HEK293 (cell line): ENCODE measurements at regions of chr19 and their contacts with region 1.

Region 1: GRCh38 chr19:34145741-34146202 is 26.5 kb upstream of the LSM14A start:
- H3K4me3 ChIP-seq: no peak overlapping the region
- H3K27ac ChIP-seq: no peak overlapping the region
- H3K4me1 ChIP-seq: peaks cover 3% of the 10 kb centered on the region; the same call in 1 of the 2 replicates
- CTCF ChIP-seq: peak; percentile 93

Region 2: GRCh38 chr19:34109601-34110000 is 36.2 kb before region 1 on chr19:
- CTCF ChIA-PET with region 1: interaction called, 21 read pairs
- POLR2A ChIA-PET with region 1: no interaction called
- H3K4me3 ChIP-seq: no peak overlapping the region
- H3K27ac ChIP-seq: no peak overlapping the region
- H3K4me1 ChIP-seq: no peaks in the 10 kb centered on the region; the same call in 1 of the 2 replicates
- CTCF ChIP-seq: no peak

Region 3: DNA sequence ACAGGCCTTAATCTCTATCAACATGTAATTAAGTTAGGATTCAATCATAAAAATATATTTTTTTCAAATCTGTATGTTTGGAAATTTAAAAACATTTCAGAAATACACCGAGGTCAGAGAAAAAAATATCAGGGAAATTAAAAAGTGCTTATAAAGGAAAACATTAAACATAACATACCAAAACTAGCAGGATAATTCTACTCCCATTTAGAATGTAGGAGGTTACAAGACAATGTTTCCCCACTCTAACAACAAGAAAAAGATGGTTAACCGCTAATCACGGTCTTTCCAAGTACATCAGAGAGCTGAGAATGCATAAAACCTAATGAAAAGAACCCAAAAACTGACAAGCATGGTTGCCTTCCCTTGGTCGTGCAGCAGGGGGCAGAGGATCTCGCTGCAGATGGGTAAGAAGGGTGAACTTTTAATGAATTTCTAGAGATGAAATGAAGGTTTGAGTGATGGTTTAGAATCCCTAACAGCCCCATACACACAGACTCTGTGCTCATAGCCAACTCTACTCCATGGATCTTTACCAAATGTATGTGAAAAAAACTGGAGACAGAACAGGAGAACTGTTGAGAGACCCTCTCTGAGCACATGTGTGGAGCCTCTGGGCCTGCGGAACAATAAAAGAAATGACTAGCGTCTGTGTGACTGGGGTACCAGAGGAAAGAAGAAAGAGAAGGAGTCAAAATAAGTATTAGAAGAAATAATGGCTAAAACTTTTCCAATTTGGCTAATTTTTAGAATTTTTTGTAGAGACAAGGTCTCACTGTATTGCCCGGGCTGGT is 24.7 kb before region 1 on chr19:
- CTCF ChIA-PET with region 1: interaction called, 133 read pairs
- POLR2A ChIA-PET with region 1: interaction called, 3 read pairs
- H3K4me3 ChIP-seq: no peak overlapping the region
- H3K27ac ChIP-seq: no peak overlapping the region
- H3K4me1 ChIP-seq: peaks cover 7% of the 10 kb centered on the region; the same call in 1 of the 2 replicates
- CTCF ChIP-seq: peak; percentile 52; the same call in 1 of the 2 replicates

Region 4: GRCh38 chr19:34128558-34129250 is 17.1 kb before region 1 on chr19:
- CTCF ChIA-PET with region 1: interaction called, 44 read pairs
- POLR2A ChIA-PET with region 1: interaction called, 16 read pairs
- H3K4me3 ChIP-seq: no peak overlapping the region
- H3K27ac ChIP-seq: no peak overlapping the region
- H3K4me1 ChIP-seq: peaks cover 6% of the 10 kb centered on the region
- CTCF ChIP-seq: no peak

Region 5: DNA sequence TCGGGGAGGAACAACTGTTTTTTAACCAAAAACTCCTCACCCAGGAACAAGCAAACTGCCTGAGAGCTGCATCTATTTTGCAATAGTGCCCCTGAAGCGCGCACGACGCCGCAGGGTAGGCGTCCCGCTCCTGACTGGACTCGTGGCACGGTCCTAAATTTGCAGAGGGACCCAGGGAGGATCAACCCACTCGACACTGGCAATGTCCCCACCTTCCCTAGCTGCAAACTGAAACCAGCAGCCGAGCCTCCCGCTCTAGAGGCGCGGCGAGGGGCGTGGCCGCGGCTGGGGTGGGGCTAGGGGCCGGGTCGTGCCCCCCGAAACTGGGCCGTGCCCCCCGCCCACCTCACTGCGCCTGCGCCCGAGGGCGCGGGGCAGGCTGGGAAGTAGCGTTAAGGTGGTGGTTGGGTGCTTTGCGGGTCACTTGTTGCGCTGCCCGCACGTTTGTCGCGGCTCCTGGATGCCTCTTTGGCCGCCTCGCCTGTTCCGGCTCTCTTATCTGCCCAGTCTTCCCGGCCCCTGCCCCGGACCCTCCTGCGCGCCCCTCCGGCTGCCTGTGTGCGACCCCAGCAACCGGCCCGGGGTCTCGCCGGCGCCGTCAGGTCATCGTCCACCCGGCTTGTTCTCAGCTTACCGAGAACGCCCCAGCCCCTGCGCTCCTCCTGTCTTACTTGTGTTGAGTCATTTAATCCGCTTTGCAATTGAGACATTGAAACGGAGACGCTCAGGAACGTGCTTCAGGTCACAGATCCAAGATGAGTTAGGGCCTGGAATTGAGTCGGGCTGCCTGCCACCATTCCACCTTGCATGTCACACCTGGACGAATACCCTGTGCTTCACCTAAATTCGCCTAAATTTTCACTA is 11.3 kb before region 1 on chr19:
- CTCF ChIA-PET with region 1: interaction called, 44 read pairs
- POLR2A ChIA-PET with region 1: interaction called, 16 read pairs
- H3K4me3 ChIP-seq: peak overlapping the region; percentile 53
- H3K27ac ChIP-seq: peak overlapping the region; percentile 99
- H3K4me1 ChIP-seq: peaks cover 11% of the 10 kb centered on the region
- CTCF ChIP-seq: peak; percentile 79; the same call in 1 of the 2 replicates

Region 6: GRCh38 chr19:34171877-34172660 is 26.3 kb after region 1 on chr19 and contains the start of gene LSM14A:
- CTCF ChIA-PET with region 1: interaction called, 11 read pairs
- POLR2A ChIA-PET with region 1: interaction called, 3 read pairs
- H3K4me3 ChIP-seq: peak within 1 kb of the TSS; percentile 85
- H3K27ac ChIP-seq: peak within 1 kb of the TSS; percentile 100
- H3K4me1 ChIP-seq: peaks cover 37% of the 10 kb centered on the region
- CTCF ChIP-seq: peak; percentile 20

Region 7: DNA sequence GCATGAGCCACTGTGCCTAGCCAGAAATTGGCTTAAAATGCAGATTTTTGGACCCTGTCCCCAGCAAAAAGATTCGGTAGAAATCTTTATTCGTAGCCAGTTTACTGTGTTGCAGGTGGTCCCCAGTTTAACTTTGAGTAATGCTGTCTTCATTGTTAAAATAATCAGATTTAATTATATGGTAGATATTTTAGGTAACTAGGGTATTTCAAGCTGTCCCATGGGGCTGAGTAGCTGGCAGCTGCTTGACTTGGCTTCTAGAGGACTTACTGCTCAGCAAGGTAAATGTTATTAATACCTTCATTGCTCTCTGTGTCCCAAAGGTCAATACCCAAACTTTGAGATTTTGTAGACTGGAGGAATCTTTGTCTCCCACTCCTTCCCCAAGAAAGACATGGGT is 47.7 kb after region 1 on chr19:
- CTCF ChIA-PET with region 1: no interaction called
- POLR2A ChIA-PET with region 1: no interaction called
- H3K4me3 ChIP-seq: no peak overlapping the region
- H3K27ac ChIP-seq: 0 out of 2 replicates have a peak overlapping the region, but pooled peaks have one; percentile 5
- H3K4me1 ChIP-seq: peaks cover 42% of the 10 kb centered on the region
- CTCF ChIP-seq: no peak

Region 8: DNA sequence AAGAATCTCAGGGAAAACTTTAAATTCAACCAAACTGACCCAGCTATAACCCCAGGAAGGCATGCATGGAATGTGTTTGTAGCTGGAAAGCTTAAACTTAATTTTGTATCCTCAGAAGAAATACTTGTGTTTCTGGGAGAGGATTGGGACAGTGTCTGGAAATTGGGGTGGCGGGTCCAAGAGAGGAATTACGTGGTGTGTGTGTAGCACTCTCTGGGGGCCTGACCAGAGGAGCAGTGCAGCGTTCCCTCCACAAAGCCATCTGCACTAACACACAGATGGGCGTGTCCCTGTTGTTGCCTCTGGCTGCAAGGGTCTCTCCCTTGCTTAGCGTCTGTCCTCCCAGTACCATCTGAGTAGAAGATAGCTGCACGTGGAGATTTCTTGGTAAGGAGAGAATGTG is 115.0 kb after region 1 on chr19:
- CTCF ChIA-PET with region 1: no interaction called
- POLR2A ChIA-PET with region 1: no interaction called
- H3K4me3 ChIP-seq: no peak overlapping the region
- H3K27ac ChIP-seq: no peak overlapping the region
- H3K4me1 ChIP-seq: peaks cover 40% of the 10 kb centered on the region
- CTCF ChIP-seq: no peak